ENCODE measurements at regions of chr7 and their contacts with region 1.

Region 1: DNA sequence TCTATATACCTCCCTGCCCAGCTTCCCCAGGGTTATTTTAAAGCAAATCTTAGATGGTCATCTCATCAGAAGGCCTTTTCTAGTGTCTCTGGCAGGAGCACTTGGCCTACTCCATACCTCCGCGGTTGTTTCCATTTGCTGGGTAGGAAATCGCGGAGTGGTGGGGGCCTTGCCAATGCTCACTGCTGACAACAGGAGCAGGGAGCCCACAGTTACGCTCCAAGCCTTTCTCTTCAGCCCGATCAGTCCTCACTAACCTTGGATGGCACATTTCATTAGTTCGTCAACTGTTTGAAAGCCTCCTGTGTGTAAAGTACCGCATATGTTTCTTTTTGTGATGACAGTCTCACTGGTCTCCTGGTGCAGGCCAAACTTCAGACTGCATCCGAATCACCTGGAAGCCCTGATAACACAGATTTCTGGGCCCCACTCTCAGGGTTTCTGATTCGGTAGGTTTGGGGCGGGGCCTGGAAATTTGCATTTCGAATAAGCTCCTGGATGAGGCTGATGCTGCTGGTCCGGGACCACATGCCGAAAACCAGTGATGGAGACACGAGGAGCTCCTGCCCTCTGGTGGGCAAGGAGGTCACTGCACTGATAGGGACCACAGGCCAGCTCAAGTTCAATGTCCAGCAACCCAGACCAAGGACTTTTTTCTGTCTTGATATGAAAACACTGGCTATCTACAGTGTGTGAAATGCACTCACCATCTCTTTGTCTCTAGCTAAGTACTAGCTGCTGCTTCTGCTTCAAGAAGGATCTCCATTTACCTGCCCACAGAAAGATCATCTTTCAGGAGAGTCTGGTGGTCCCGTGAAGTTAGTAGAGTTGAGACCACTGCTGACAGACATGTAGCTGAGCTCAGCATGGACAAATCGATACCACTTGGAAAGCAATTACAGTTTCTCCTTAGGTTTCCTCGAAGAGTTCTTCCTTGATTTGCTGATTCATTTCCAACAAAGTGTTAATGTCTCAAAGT is 14.0 kb downstream of the LRGUK start:
- DNase-seq: peak; percentile 45 to 63
- H3K4me3 ChIP-seq: no peak overlapping the region
- H3K27ac ChIP-seq: no peak overlapping the region
- H3K4me1 ChIP-seq: no peaks in the 10 kb centered on the region
- H3K27me3 ChIP-seq: no peaks in the 10 kb centered on the region
- CTCF ChIP-seq: peak; percentile 94

Region 2: GRCh38 chr7:134165252-134165651 is 24.1 kb after region 1 on chr7:
- CTCF ChIA-PET with region 1: interaction called, 11 read pairs
- POLR2A ChIA-PET with region 1: no interaction called
- intact Hi-C with region 1: no loop called
- DNase-seq: no peak
- H3K4me3 ChIP-seq: no peak overlapping the region
- H3K27ac ChIP-seq: no peak overlapping the region
- H3K4me1 ChIP-seq: no peaks in the 10 kb centered on the region
- H3K27me3 ChIP-seq: no peaks in the 10 kb centered on the region
- CTCF ChIP-seq: no peak

Region 3: GRCh38 chr7:134420424-134421125 is 279.4 kb after region 1 on chr7:
- CTCF ChIA-PET with region 1: no interaction called
- POLR2A ChIA-PET with region 1: no interaction called
- intact Hi-C with region 1: loop called (anchors 5 kb)
- DNase-seq: peak in 1 of 2 experiments; percentile 46
- H3K4me3 ChIP-seq: no peak overlapping the region
- H3K27ac ChIP-seq: no peak overlapping the region
- H3K4me1 ChIP-seq: peaks cover 23% of the 10 kb centered on the region
- H3K27me3 ChIP-seq: no peaks in the 10 kb centered on the region
- CTCF ChIP-seq: peak; percentile 93

Measured in PC-9 (cell line).